GM13976 (cell line): ENCODE measurements at regions of chr4 and their contacts with region 1.

Region 1: GRCh38 chr4:26076000-26076587 is 162.1 kb downstream of the SMIM20 start:
- DNase-seq: peak; percentile 43
- CTCF ChIP-seq: no peak

Region 2: GRCh38 chr4:26320538-26321325 is 244.6 kb after region 1 on chr4 and contains the start of gene RBPJ:
- in situ Hi-C with region 1: loop called (anchors 10 kb)
- DNase-seq: peak; percentile 84
- CTCF ChIP-seq: no peak

Region 3: GRCh38 chr4:26410385-26411293 is 334.5 kb after region 1 on chr4:
- in situ Hi-C with region 1: loop called (anchors 10 kb)
- DNase-seq: peak; percentile 61
- CTCF ChIP-seq: peak; percentile 39

Region 4: GRCh38 chr4:26459054-26459755 is 383.1 kb after region 1 on chr4:
- in situ Hi-C with region 1: no loop called
- DNase-seq: peak; percentile 66
- CTCF ChIP-seq: peak; percentile 38